ENCODE measurements at regions of chr1 and their contacts with region 1.

Region 1: GRCh38 chr1:8121261-8122170 is 95.4 kb upstream of the ERRFI1 start:
- DNase-seq: no peak
- ATAC-seq: peak; percentile 39
- H3K4me3 Mint-ChIP-seq: no peak overlapping the region
- H3K27ac Mint-ChIP-seq: no peak overlapping the region
- H3K4me1 Mint-ChIP-seq: peaks cover 10% of the 10 kb centered on the region
- H3K27me3 Mint-ChIP-seq: peaks cover 6% of the 10 kb centered on the region

Region 2: DNA sequence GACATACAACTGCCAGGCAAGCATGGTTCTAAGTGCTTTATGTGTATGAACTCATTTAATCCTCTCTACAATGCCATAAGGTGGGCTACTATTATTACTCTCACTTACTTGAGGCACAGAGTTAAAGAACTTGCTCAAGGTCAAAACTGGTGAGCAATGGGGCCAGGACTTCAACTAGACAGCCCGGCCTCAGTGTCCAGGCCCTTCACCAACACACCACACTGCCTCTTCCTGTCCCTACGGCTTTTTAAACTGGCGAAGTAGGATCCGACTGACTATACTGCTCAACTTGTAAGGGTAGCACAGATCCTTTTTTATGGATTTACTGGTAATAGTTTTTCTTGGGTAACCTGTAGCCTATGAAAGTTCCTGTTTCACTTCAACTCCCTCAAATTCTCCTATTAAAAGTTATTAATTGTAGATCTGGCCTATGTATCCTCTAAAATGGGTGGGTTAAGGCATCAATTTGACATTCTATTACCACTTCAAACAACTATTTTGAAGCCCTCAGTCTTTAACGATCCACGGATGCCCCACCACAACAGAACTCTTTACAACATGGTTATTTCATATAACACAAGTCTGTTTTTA is 99.7 kb before region 1 on chr1:
- CTCF ChIA-PET with region 1: no interaction called
- POLR2A ChIA-PET with region 1: no interaction called
- intact Hi-C with region 1: no loop called
- DNase-seq: no peak
- ATAC-seq: no peak
- H3K4me3 Mint-ChIP-seq: no peak overlapping the region
- H3K27ac Mint-ChIP-seq: no peak overlapping the region
- H3K4me1 Mint-ChIP-seq: peaks cover 10% of the 10 kb centered on the region
- H3K27me3 Mint-ChIP-seq: peaks cover 26% of the 10 kb centered on the region

Region 3: DNA sequence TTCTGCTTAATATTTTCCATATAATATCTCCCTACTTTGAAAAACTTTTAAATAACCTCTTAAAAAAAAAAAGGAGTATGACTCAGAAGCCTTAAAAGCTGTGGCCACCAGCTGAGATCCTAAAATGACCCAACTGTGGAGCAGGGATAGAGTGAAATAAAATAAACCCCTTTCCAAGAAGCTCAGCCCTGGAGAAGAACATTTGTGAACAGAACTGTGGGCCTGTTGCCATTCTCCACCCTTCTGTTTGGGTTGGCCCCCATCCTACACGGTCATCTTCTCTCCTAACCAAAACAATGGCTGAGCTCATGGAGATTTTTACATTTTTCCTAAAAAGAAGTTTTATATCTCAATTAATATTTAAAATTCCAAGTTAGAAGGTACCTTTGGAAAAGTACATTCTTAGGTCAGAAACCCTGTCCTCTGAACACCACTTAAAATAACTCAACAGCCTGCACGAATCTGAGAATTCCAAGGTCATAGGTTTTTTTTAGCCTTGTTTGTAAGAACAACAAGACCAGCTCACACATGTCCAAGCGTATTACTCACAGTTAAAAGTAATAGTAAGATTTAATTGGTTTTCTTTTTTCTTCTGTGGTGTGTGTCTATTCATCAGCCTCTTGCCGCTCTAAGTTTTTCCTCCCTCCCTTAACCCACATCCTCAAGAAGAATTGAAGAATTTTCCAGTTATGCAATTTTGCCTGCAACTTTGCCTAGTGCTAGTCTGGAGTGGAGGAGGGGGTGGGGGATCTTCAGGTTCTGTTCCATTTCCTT is 12.3 kb after region 1 on chr1:
- CTCF ChIA-PET with region 1: interaction called, 15 read pairs
- POLR2A ChIA-PET with region 1: interaction called, 3 read pairs
- intact Hi-C with region 1: loop called (anchors 1 kb)
- DNase-seq: no peak
- ATAC-seq: no peak
- H3K4me3 Mint-ChIP-seq: no peak overlapping the region
- H3K27ac Mint-ChIP-seq: no peak overlapping the region
- H3K4me1 Mint-ChIP-seq: peaks cover 7% of the 10 kb centered on the region
- H3K27me3 Mint-ChIP-seq: peaks cover 21% of the 10 kb centered on the region